ENCODE measurements at regions of chr19 and their contacts with region 1.

Region 1: DNA sequence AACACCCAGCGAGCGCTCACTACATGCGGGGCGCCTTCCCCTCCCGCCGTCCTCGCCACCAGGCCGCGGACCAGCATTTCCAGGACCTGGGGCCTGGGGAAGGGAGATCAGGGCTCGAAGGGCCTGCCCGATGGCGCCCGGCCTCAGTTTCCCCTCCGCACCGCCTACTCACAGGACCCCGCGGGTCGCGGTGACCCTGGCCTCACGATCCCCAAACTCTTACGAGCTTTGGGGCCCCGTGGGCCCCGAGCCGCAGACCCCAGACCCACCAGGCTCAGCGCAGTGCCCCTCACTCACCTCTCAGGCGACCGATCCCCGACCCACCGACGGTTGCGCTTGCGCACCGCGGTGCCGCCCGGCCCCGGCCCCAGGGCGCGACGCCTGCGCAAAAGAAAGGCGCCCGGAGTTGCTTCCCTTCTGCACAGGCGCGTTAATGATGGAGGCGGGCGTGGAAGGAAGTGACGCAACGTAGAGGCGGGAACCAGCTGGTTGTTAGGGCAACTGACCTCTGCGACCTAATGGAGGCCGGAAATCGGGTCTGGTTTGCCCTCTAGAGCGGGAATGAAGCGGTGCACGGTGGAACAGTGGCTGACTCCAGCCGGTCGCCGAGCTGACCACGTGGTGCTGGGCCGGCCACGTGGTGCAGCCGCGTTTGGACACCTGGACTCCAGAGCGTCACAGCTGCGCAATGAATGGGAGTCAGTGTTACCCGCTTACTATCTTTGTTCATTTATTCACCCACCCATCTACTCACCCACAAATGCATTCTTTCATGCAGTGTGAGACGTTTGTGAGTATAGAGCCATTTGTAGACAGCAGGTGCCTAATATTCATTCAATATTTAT is at the start of gene SGTA:
- DNase-seq: peak; percentile 99
- H3K4me3 ChIP-seq: peak within 1 kb of the TSS; percentile 88 to 100 (median 98)
- H3K27ac ChIP-seq: peak within 1 kb of the TSS; percentile 92 to 99 (median 96)
- H3K4me1 ChIP-seq: peaks cover 7 to 52% (median 32%) of the 10 kb centered on the region in 4 donors
- H3K27me3 ChIP-seq: no peaks in the 10 kb centered on the region
- CTCF ChIP-seq: peak; percentile 32 to 70 (median 49)
- EP300 ChIP-seq: peak; percentile 28
- POLR2A ChIP-seq: peak; percentile 86
- total RNA-seq, gene SGTA: 37.0 to 66.6 (median 47.5) TPM

Region 2: DNA sequence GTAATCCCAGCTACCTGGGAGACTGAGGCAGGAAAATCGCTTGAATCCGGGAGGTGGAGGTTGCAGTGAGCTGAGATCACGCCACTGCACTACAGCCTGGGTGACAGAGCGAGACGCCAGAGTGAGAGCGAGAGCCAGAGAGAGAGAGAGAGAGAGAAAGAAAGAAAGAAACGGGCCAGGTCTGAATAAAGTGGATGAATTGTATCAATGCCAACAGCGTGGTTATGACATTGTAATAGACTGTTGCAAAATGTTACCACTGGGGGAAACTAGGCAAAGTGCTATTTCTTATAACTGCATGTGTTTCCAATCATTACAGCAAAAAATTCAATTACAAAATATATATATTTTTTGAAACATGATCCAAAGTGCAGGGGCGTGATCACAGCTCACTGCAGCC is 755.8 kb before region 1 on chr19:
- in situ Hi-C with region 1: no loop called
- intact Hi-C with region 1: loop called (anchors 10 kb)
- DNase-seq: no peak
- H3K4me3 ChIP-seq: no peak overlapping the region
- H3K27ac ChIP-seq: no peak overlapping the region
- H3K4me1 ChIP-seq: peaks cover 10 to 41% (median 19%) of the 10 kb centered on the region in 4 donors
- H3K27me3 ChIP-seq: no peaks in the 10 kb centered on the region
- CTCF ChIP-seq: no peak
- EP300 ChIP-seq: no peak
- POLR2A ChIP-seq: no peak